GM12878 (cell line): ENCODE measurements at regions of chr2 and their contacts with region 1.

Region 1: GRCh38 chr2:111705711-111706336 is 178.2 kb downstream of the ANAPC1 start:
- DNase-seq: peak; percentile 78
- ATAC-seq: peak; percentile 91
- H3K4me3 ChIP-seq: no peak overlapping the region
- H3K27ac ChIP-seq: no peak overlapping the region
- H3K4me1 ChIP-seq: peaks cover 20% of the 10 kb centered on the region
- H3K27me3 ChIP-seq: no peaks in the 10 kb centered on the region
- CTCF ChIP-seq: no peak
- EP300 ChIP-seq: peak; percentile 77 to 94; a peak in 3 of 4 replicates
- POLR2A ChIP-seq: no peak
- RAD21 ChIP-seq: no peak

Region 2: DNA sequence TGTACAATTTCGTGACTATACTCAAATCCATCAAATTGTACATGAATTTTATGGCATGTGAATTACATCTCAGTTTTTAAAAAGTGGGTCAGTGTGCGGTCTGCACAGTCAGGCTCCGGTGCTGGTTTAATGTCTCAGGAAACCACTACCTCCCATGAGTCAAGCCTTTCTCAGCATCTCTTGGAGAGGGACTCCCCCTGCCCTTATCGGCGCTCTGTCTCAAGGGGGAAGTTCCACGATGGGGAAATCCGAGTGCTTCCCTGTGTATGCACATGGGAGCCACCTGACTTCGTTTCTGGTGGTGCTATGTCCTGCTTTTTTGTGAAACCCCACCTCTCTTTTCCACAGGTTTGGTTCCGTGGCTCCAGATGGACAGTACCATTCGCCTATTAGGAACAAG is 900.9 kb before region 1 on chr2:
- CTCF ChIA-PET with region 1: no interaction called
- POLR2A ChIA-PET with region 1: no interaction called
- RAD21 ChIA-PET with region 1: no interaction called
- SMC1A ChIA-PET with region 1: no interaction called
- in situ Hi-C with region 1: loop called (anchors 25 kb)
- intact Hi-C with region 1: no loop called
- DNase-seq: peak; percentile 66
- ATAC-seq: peak; percentile 89
- H3K4me3 ChIP-seq: no peak overlapping the region
- H3K27ac ChIP-seq: no peak overlapping the region
- H3K4me1 ChIP-seq: peaks cover 15% of the 10 kb centered on the region
- H3K27me3 ChIP-seq: no peaks in the 10 kb centered on the region; a peak in 1 of 4 replicates
- CTCF ChIP-seq: no peak
- EP300 ChIP-seq: peak; percentile 29 to 41; a peak in 2 of 4 replicates
- POLR2A ChIP-seq: no peak
- RAD21 ChIP-seq: no peak